ENCODE measurements at regions of chr3 and their contacts with region 1.

Region 1: GRCh38 chr3:90091204-90091924 is 983.9 kb downstream of the EPHA3 start:
- DNase-seq: no peak
- ATAC-seq: peak; percentile 94
- H3K4me3 ChIP-seq: no peak overlapping the region
- H3K27ac ChIP-seq: no peak overlapping the region
- H3K4me1 ChIP-seq: no peaks in the 10 kb centered on the region
- H3K27me3 ChIP-seq: no peaks in the 10 kb centered on the region
- CTCF ChIP-seq: peak; percentile 22 to 49 (median 42); a peak in 4 of 6 replicates
- EP300 ChIP-seq: no peak
- POLR2A ChIP-seq: no peak
- RAD21 ChIP-seq: peak; percentile 60

Region 2: DNA sequence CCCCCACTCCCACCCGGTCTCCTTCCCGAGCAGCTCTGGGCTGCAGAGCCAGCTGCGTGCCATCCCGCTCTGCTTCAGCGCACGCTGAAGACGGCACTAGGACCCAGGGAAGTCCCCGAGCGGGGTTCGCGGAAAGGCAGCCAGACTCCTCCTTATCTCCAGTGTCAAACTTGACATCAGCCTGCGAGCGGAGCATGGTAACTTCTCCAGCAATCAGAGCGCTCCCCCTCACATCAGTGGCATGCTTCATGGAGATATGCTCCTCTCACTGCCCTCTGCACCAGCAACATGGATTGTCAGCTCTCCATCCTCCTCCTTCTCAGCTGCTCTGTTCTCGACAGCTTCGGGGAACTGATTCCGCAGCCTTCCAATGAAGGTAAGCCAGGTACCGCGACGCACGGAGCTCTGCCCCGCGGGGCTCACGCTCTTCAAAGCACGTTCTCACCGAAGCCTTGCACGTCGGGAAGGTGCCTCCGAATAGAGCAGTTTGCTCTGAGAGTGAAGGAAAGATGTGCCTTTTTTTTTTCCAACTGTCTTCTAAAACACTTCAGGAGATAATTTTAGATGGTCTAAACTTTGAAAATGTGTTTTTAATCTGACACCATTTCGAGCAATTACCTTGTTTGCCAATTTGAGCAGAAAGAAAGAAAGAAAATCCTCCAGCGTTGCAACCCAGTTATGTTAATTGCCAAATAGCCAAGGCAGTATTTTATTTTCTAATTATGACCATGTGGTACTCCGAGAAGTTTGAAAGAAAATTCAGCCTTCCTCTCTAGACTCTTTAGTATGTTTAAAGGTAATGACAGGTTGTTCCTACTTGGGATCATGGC is 983.7 kb before region 1 on chr3 and contains the start of gene EPHA3:
- CTCF ChIA-PET with region 1: interaction called, 5 read pairs
- POLR2A ChIA-PET with region 1: no interaction called
- RAD21 ChIA-PET with region 1: interaction called, 3 read pairs
- SMC1A ChIA-PET with region 1: interaction called, 5 read pairs
- in situ Hi-C with region 1: no loop called
- intact Hi-C with region 1: loop called (anchors 10 kb)
- DNase-seq: no peak
- ATAC-seq: peak; percentile 96
- H3K4me3 ChIP-seq: no peak within 1 kb of the TSS; the same call in 1 of the 2 replicates
- H3K27ac ChIP-seq: no peak within 1 kb of the TSS
- H3K4me1 ChIP-seq: no peaks in the 10 kb centered on the region; the same call in 1 of the 2 replicates
- H3K27me3 ChIP-seq: peaks cover 0 to 2% of the 10 kb centered on the region in 2 experiments; a peak in 1 of 4 replicates
- CTCF ChIP-seq: no peak
- EP300 ChIP-seq: no peak
- POLR2A ChIP-seq: no peak
- RAD21 ChIP-seq: no peak
- polyA plus RNA-seq, gene EPHA3: not detected

Region 3: GRCh38 chr3:89560546-89560945 is 530.8 kb before region 1 on chr3:
- CTCF ChIA-PET with region 1: interaction called, 24 read pairs
- POLR2A ChIA-PET with region 1: no interaction called
- RAD21 ChIA-PET with region 1: interaction called, 27 read pairs
- SMC1A ChIA-PET with region 1: interaction called, 13 read pairs
- in situ Hi-C with region 1: no loop called
- intact Hi-C with region 1: loop called (anchors 5 kb)
- DNase-seq: no peak
- ATAC-seq: no peak
- H3K4me3 ChIP-seq: no peak overlapping the region
- H3K27ac ChIP-seq: no peak overlapping the region
- H3K4me1 ChIP-seq: no peaks in the 10 kb centered on the region
- H3K27me3 ChIP-seq: no peaks in the 10 kb centered on the region
- CTCF ChIP-seq: no peak
- EP300 ChIP-seq: no peak
- POLR2A ChIP-seq: no peak
- RAD21 ChIP-seq: no peak

Region 4: DNA sequence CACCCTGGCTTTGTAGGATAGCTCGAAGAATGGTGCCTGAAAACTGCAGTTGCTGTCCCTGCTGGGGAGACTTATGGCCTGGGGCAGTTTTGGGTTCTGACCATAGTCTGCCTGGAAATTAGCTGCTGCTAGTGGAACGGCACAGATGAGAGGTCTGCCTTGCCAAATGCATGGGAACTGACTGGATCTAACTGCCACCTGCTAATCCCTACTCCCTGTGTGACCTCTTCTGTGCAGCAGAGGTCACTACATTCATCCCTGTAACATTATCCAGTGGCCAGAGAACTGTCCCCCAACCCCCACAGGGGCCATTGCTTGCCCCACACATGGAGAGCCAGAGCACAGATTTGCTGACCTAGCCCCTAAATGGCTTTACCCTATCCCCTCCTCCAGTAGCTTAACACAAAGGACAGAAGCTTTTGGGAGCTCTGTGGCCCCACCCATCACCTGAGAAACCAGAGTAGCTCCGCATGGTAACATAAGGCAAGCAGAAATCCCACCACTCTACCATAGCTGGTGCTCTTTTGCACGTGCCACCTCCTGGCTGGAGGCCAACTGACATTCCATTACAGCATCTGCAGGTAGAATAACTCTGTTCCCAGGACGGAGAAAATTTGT is 143.9 kb before region 1 on chr3:
- CTCF ChIA-PET with region 1: interaction called, 58 read pairs
- POLR2A ChIA-PET with region 1: no interaction called
- RAD21 ChIA-PET with region 1: interaction called, 25 read pairs
- SMC1A ChIA-PET with region 1: interaction called, 22 read pairs
- in situ Hi-C with region 1: no loop called
- intact Hi-C with region 1: loop called (anchors 5 kb)
- DNase-seq: no peak
- ATAC-seq: no peak
- H3K4me3 ChIP-seq: no peak overlapping the region
- H3K27ac ChIP-seq: no peak overlapping the region
- H3K4me1 ChIP-seq: no peaks in the 10 kb centered on the region
- H3K27me3 ChIP-seq: no peaks in the 10 kb centered on the region
- CTCF ChIP-seq: no peak
- EP300 ChIP-seq: no peak
- POLR2A ChIP-seq: no peak
- RAD21 ChIP-seq: no peak

Region 5: DNA sequence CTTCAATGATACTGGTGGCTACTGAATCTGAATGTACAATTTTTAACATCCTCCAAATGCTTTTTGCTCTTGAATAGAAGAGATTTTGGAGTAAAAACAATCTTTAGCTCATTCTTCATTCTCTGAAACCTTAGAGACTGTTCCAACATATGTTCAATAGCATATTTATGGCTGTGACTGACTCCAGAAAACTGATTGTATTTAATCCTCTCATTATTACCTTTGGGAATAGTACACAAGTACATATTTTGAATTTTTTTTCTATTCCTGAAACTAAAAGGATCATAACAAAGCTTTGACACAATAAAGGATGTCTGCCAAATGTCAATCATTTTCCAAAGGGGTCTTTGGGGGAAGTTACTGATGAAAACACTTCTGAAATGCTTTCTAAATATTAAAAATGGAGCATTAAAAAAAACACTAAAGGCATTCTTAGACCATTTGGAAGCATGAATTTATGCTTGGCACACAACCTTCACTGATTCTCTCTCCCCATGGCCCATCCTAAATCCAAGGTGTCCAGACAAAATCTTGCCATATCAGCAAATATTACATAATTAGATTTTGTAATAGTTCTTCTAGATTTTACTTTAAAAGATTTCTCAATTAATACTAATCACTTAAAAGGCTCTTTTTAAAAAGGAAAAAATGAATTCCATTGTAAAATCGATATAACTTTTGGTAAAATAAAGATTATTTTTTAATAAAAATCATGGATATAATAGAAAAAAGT is 47.1 kb before region 1 on chr3:
- CTCF ChIA-PET with region 1: interaction called, 6 read pairs
- POLR2A ChIA-PET with region 1: interaction called, 3 read pairs
- RAD21 ChIA-PET with region 1: interaction called, 6 read pairs
- SMC1A ChIA-PET with region 1: interaction called, 10 read pairs
- in situ Hi-C with region 1: no loop called
- intact Hi-C with region 1: no loop called
- DNase-seq: no peak
- ATAC-seq: no peak
- H3K4me3 ChIP-seq: no peak overlapping the region
- H3K27ac ChIP-seq: no peak overlapping the region
- H3K4me1 ChIP-seq: no peaks in the 10 kb centered on the region
- H3K27me3 ChIP-seq: no peaks in the 10 kb centered on the region
- CTCF ChIP-seq: no peak
- EP300 ChIP-seq: no peak
- POLR2A ChIP-seq: no peak
- RAD21 ChIP-seq: no peak

Region 6: DNA sequence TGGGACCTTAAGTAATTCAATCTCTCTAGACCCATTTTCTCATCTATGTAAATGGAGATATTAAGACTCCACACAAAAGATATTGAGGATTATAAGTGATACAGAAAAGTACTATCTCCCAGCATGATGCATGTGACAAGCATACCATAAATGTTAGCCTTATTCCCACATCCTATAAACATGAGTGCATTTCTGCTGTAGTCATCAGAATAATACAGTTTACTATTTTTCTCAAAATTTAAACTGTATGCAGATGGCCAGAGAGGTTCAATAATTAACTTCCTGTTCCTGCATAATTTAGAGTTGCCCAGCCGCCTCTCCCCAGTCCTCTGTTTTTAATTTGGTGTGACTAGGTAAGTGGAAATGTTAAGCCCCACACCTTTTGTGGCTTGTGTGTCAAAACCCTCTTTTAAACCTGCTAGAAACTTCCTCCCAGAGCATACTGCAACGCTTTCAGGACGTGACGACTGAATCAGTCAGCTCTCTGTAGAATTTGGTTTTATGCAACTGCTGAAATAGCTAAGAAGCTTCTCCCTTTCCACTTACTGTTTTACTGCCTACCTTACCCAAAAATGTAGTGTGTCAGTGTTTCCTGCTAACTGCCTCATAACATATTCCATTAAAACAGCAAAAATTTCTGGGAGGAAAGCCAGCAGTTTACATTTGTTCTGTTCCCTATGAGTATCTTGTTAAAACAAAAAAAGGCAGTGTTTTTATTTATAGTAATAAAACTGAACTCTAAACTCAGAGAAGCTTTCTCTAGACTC is 53.9 kb after region 1 on chr3:
- CTCF ChIA-PET with region 1: interaction called, 12 read pairs
- POLR2A ChIA-PET with region 1: no interaction called
- RAD21 ChIA-PET with region 1: interaction called, 3 read pairs
- SMC1A ChIA-PET with region 1: interaction called, 4 read pairs
- in situ Hi-C with region 1: no loop called
- intact Hi-C with region 1: no loop called
- DNase-seq: no peak
- ATAC-seq: no peak
- H3K4me3 ChIP-seq: no peak overlapping the region
- H3K27ac ChIP-seq: no peak overlapping the region
- H3K4me1 ChIP-seq: no peaks in the 10 kb centered on the region
- H3K27me3 ChIP-seq: no peaks in the 10 kb centered on the region
- CTCF ChIP-seq: no peak
- EP300 ChIP-seq: no peak
- POLR2A ChIP-seq: no peak
- RAD21 ChIP-seq: no peak

Measured in GM12878 (cell line).